ENCODE measurements at regions of chr6 and their contacts with region 1.

Region 1: DNA sequence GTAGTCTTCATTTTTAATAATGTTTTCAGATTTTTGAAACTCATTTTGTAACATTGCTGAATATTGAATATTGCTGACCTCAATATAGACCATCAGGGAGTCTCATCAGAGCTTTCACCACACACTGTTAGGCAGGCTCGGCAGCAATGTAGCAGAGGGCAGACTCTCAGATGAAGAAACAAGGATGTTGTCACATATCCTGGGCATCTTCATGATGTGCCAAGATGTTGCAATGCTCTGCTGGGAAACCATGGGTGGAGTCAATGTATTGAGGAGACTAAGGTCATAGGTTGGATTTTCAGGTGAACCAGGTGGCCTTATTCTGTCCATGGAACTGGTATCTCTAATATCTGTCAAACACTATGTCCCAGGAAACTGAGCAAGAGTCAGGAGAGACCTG is 27.3 kb downstream of the NR2E1 start:
- DNase-seq: no peak
- H3K4me3 ChIP-seq: no peak overlapping the region
- CTCF ChIP-seq: no peak
- POLR2A ChIP-seq: no peak

Region 2: DNA sequence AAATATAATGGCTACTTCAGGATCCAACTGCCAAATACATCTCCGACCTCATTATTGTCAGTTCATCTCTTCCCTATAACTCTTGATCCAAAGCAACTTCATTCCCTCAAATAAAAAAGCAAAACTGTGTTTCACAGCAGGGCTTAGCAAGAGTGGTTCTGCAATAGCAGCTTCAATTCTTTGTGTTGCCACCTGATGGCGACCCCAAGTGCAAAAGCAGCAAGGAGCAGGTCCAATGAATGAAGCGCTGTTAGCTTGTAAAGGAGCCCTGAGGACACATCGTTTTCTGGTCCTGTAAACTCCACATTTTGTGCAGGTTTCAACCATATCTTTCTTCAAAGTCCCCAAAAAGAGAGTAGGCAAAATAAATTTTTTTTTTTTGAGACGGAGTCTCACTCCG is 1583.4 kb before region 1 on chr6:
- intact Hi-C with region 1: loop called (anchors 10 kb)
- DNase-seq: no peak
- H3K4me3 ChIP-seq: no peak overlapping the region
- CTCF ChIP-seq: no peak
- POLR2A ChIP-seq: no peak

Region 3: GRCh38 chr6:108030211-108030610 is 162.9 kb before region 1 on chr6:
- intact Hi-C with region 1: no loop called
- DNase-seq: no peak
- H3K4me3 ChIP-seq: no peak overlapping the region
- CTCF ChIP-seq: no peak
- POLR2A ChIP-seq: no peak

Region 4: GRCh38 chr6:108321253-108321740 is 128.2 kb after region 1 on chr6:
- intact Hi-C with region 1: no loop called
- DNase-seq: no peak
- H3K4me3 ChIP-seq: no peak overlapping the region
- CTCF ChIP-seq: no peak
- POLR2A ChIP-seq: no peak

Region 5: GRCh38 chr6:108604156-108604555 is 411.0 kb after region 1 on chr6:
- intact Hi-C with region 1: loop called (anchors 5 kb)
- DNase-seq: no peak
- H3K4me3 ChIP-seq: no peak overlapping the region
- CTCF ChIP-seq: no peak
- POLR2A ChIP-seq: no peak

Region 6: GRCh38 chr6:109816452-109817374 is 1623.6 kb after region 1 on chr6:
- intact Hi-C with region 1: no loop called
- DNase-seq: no peak
- H3K4me3 ChIP-seq: no peak overlapping the region
- CTCF ChIP-seq: no peak
- POLR2A ChIP-seq: no peak

Measured in lower leg skin (tissue), 4 donors.